HCT116 (cell line): ENCODE measurements at regions of chr3 and their contacts with region 1.

Region 1: DNA sequence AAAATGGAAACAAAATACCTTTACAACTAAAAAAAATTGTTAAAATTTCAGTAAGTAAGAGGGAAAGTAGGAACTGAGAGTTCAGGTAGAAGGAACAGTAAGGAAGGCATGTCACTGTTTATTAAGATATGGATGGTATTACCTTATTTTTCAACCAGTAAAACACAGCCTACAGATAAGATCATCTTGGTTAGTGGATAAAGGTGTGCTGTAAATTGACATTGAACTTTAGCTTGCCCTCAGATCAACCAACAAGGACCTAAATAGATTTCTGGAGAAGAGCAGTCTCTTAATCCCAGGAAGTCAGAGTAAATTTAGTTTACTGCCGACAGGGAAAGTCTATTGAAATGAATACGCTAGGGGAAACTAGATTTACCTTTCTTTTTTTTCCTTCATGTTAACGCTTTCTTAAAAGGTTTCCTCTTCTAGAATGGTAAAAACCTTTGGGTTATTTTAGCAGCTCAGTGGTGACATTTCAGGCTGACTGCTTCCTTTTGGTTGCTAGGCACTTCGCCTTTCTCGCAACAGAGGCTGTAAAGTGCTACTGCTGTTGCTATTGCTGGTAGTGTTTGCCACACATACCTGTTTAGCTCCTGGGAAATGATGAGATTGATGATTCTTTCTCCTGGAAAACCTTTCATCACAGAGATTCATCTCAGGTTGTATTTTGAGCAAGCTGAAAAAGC is 12.9 kb downstream of the DZIP3 start:
- DNase-seq: no peak
- ATAC-seq: no peak
- H3K4me3 ChIP-seq: no peak overlapping the region
- H3K27ac ChIP-seq: no peak overlapping the region
- H3K4me1 ChIP-seq: no peaks in the 10 kb centered on the region
- H3K27me3 ChIP-seq: no peaks in the 10 kb centered on the region
- CTCF ChIP-seq: no peak
- POLR2A ChIP-seq: no peak
- RAD21 ChIP-seq: no peak

Region 2: DNA sequence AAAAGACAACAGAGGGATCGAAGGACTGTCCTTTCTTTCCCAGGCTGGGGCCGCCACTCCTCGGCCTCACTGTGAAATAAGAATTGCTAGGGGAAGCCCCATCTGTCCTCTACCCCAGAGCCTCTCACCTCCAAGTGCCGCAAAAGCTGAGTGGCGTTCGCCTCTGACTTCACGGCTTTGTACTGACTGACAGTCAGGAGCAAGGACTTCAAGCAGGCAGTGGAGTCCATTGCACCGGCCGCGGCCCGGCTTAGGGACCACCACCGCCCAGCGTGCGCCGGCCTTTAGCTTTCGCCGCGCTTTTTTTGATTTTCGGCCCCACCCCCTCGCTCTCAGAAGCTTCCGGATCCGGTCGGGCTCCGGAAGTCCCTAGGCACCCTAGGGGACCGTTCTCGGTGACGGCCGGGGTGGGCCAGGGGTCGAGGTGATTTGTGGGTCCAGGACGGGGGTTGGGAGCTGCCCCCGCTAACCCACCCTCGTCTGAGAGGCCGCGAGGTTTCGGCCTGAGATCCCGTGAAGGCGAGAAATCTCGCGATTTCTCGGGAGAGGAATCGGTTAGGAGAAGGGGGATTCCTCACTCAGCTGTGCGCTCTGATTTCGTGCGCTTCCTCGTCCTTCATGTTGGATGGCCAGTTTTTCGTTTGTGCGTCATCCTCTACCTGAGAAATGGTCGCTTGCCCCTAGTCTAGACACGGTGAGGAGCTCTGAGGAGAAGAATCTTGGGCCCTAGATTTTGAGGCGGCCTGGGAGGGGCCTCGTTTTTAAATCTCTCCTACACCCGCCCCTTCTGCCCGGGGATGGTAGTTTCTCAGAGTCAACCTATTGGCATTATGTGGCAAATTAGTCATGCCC is 13.0 kb before region 1 on chr3 and contains the starts of genes CIP2A and DZIP3:
- CTCF ChIA-PET with region 1: no interaction called
- POLR2A ChIA-PET with region 1: interaction called, 12 read pairs
- RAD21 ChIA-PET with region 1: no interaction called
- intact Hi-C with region 1: no loop called
- DNase-seq: peak; percentile 91
- ATAC-seq: peak; percentile 96
- H3K4me3 ChIP-seq: peak within 1 kb of the TSS; percentile 92 to 95
- H3K27ac ChIP-seq: peak within 1 kb of the TSS; percentile 87
- H3K4me1 ChIP-seq: peaks cover 0 to 23% of the 10 kb centered on the region in 2 experiments; a peak in 3 of 4 replicates
- H3K27me3 ChIP-seq: no peaks in the 10 kb centered on the region
- CTCF ChIP-seq: no peak
- POLR2A ChIP-seq: peak; percentile 94
- RAD21 ChIP-seq: no peak
- total RNA-seq, gene CIP2A: 41.6 TPM
- total RNA-seq, gene DZIP3: 19.4 TPM